Heart right ventricle (tissue), 16 donors: ENCODE measurements at regions of chr17 and their contacts with region 1.

Region 1: DNA sequence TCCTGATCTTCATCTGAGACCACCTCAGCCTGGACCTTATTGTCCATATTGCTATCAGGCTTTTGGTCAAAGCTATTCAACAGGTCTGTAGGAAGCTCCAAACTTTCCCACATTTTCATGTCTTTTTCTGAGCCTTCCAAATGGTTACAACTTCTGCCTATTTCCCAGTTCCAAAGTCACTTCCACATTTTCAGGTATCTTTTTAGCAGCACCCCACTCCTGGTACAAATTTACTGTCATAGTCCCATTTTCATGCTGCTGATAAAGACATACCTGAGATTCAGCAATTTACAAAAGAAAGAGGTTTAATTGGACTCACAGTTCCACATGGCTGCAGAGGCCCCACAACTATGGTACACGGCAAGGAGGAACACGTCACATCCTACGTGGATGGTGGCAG is 815.5 kb downstream of the KCNJ2 start:
- DNase-seq: no peak
- ATAC-seq: no peak
- H3K4me3 ChIP-seq: no peak overlapping the region
- H3K27ac ChIP-seq: no peak overlapping the region
- H3K4me1 ChIP-seq: no peaks in the 10 kb centered on the region
- H3K27me3 ChIP-seq: no peaks in the 10 kb centered on the region
- CTCF ChIP-seq: no peak

Region 2: GRCh38 chr17:71032746-71033273 is 47.9 kb after region 1 on chr17:
- intact Hi-C with region 1: loop called in 1 of 10 experiments (anchors 5 kb)
- DNase-seq: no peak
- ATAC-seq: no peak
- H3K4me3 ChIP-seq: no peak overlapping the region
- H3K27ac ChIP-seq: no peak overlapping the region
- H3K4me1 ChIP-seq: no peaks in the 10 kb centered on the region
- H3K27me3 ChIP-seq: no peaks in the 10 kb centered on the region
- CTCF ChIP-seq: no peak